ENCODE measurements at regions of chrX and their contacts with region 1.

Region 1: GRCh38 chrX:74286950-74287740 is 16.8 kb upstream of the ZCCHC13 start:
- DNase-seq: no peak
- ATAC-seq: no peak
- H3K4me3 ChIP-seq: no peak overlapping the region
- H3K27ac ChIP-seq: peak overlapping the region; percentile 75
- H3K4me1 ChIP-seq: peaks cover 44% of the 10 kb centered on the region
- H3K27me3 ChIP-seq: no peaks in the 10 kb centered on the region
- CTCF ChIP-seq: no peak

Region 2: GRCh38 chrX:74160358-74160757 is 126.8 kb before region 1 on chrX:
- CTCF ChIA-PET with region 1: no interaction called
- POLR2A ChIA-PET with region 1: no interaction called
- in situ Hi-C with region 1: no loop called
- intact Hi-C with region 1: no loop called
- DNase-seq: no peak
- ATAC-seq: no peak
- H3K4me3 ChIP-seq: no peak overlapping the region
- H3K27ac ChIP-seq: no peak overlapping the region; the same call in 1 of the 2 replicates
- H3K4me1 ChIP-seq: no peaks in the 10 kb centered on the region
- H3K27me3 ChIP-seq: no peaks in the 10 kb centered on the region
- CTCF ChIP-seq: no peak

Region 3: GRCh38 chrX:74536152-74536831 is 249.1 kb after region 1 on chrX:
- CTCF ChIA-PET with region 1: no interaction called
- POLR2A ChIA-PET with region 1: no interaction called
- in situ Hi-C with region 1: no loop called
- intact Hi-C with region 1: loop called (anchors 5 kb)
- DNase-seq: no peak
- ATAC-seq: peak; percentile 87
- H3K4me3 ChIP-seq: peak overlapping the region; percentile 52 to 71
- H3K27ac ChIP-seq: peak overlapping the region; percentile 73
- H3K4me1 ChIP-seq: peaks cover 2% of the 10 kb centered on the region; the same call in 1 of the 2 replicates
- H3K27me3 ChIP-seq: no peaks in the 10 kb centered on the region
- CTCF ChIP-seq: no peak

Region 4: GRCh38 chrX:74704101-74704500 is 417.0 kb after region 1 on chrX:
- CTCF ChIA-PET with region 1: no interaction called
- POLR2A ChIA-PET with region 1: no interaction called
- in situ Hi-C with region 1: no loop called
- intact Hi-C with region 1: no loop called
- DNase-seq: no peak
- ATAC-seq: no peak
- H3K4me3 ChIP-seq: no peak overlapping the region
- H3K27ac ChIP-seq: no peak overlapping the region
- H3K4me1 ChIP-seq: no peaks in the 10 kb centered on the region
- H3K27me3 ChIP-seq: no peaks in the 10 kb centered on the region; the same call in 1 of the 2 replicates
- CTCF ChIP-seq: no peak